ENCODE measurements at regions of chr17 and their contacts with region 1.

Region 1: GRCh38 chr17:17681187-17681848 is at the start of gene RAI1:
- DNase-seq: peak; percentile 77
- H3K4me3 Mint-ChIP-seq: peak within 1 kb of the TSS; percentile 87
- H3K27ac Mint-ChIP-seq: peak within 1 kb of the TSS; percentile 78
- H3K4me1 Mint-ChIP-seq: peaks cover 24% of the 10 kb centered on the region
- H3K27me3 Mint-ChIP-seq: no peaks in the 10 kb centered on the region
- total RNA-seq, gene RAI1: 10.5 to 11.0 TPM

Region 2: GRCh38 chr17:17613708-17614114 is 67.6 kb before region 1 on chr17:
- CTCF ChIA-PET with region 1: no interaction called
- POLR2A ChIA-PET with region 1: no interaction called
- intact Hi-C with region 1: no loop called
- DNase-seq: peak; percentile 60
- H3K4me3 Mint-ChIP-seq: no peak overlapping the region
- H3K27ac Mint-ChIP-seq: no peak overlapping the region
- H3K4me1 Mint-ChIP-seq: no peaks in the 10 kb centered on the region
- H3K27me3 Mint-ChIP-seq: no peaks in the 10 kb centered on the region

Region 3: DNA sequence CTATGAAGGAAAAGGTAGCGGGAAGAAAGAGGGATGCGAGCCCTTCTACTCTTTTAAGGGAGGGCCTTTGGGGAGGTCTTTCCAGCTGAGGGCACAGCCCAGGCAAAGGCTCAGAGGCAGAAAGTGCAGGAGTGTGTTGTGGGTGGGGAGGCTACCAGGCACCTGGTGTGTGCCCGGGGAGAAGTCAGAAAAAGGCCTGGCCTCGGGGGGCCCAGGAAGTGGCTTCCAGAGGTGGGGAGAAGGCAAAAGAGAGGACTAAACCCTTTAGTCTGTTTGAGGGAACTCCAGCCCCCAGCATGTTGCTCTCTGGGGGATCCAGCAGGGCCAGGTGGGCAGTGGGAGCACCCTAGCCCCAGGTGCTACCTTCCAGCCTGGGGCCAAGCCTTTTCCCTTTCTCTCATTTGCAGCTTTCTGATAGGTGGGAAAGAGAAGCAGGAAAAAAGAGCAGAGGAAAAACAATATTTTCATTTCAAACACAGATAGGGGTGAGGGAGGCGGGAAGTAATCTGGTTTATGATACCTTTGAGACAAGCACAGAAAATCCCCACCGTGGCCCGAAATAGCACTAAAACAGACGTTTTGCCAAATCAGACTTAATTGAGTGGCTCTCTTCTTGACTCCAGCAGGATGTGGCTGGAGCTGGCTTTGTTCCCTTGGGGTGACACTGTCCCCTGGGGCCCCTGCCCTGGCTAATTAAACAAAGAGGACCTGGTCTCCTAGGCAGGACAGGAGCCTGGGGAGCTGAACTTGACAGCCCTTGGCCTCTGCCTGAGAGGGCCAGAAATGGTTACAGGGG is 10.3 kb after region 1 on chr17:
- CTCF ChIA-PET with region 1: interaction called, 19 read pairs
- POLR2A ChIA-PET with region 1: interaction called, 6 read pairs
- intact Hi-C with region 1: no loop called
- DNase-seq: peak; percentile 22
- H3K4me3 Mint-ChIP-seq: no peak overlapping the region
- H3K27ac Mint-ChIP-seq: peak overlapping the region; percentile 49
- H3K4me1 Mint-ChIP-seq: peaks cover 50% of the 10 kb centered on the region
- H3K27me3 Mint-ChIP-seq: no peaks in the 10 kb centered on the region

Region 4: GRCh38 chr17:17752089-17752820 is 70.9 kb after region 1 on chr17:
- CTCF ChIA-PET with region 1: interaction called, 3 read pairs
- POLR2A ChIA-PET with region 1: no interaction called
- intact Hi-C with region 1: loop called (anchors 1 kb)
- DNase-seq: peak; percentile 99
- H3K4me3 Mint-ChIP-seq: peak overlapping the region; percentile 96
- H3K27ac Mint-ChIP-seq: peak overlapping the region; percentile 93
- H3K4me1 Mint-ChIP-seq: peaks cover 39% of the 10 kb centered on the region
- H3K27me3 Mint-ChIP-seq: no peaks in the 10 kb centered on the region

Region 5: DNA sequence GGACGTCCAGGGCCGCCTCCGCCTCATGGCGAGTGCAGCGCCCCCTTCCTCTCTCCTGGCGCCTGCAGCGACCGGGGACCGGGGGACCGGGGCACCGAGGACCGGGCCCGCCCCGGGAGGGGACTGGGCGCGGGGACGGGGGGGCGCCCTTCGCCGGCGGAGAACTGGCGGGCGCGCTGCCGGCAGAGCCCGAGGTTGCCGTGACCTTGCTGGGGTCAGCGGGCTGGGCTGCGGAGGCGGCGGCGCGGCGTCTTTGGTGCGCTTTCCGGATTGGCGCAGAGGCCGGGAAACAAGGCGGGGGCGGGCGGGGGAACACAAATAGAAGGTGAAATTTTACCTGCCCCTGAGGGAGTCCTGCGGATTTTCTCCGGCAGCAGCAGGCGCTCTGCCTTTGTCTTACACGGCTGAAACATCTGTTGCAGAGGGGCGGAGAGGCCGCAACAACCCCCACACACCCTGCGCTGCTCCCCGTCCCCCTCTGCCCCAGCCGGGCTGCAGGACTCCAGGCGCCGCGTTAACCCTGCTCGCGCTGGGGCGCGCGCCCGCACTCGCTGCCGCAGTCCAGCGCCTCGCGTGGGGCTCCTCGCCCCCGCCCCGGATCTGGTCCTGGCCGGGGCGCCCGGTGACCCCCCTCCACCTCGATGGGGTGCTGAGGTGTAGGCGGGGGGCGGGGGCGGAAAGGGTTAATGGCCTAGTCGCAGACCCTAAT is 102.0 kb after region 1 on chr17:
- CTCF ChIA-PET with region 1: interaction called, 3 read pairs
- POLR2A ChIA-PET with region 1: no interaction called
- intact Hi-C with region 1: loop called (anchors 5 kb)
- DNase-seq: peak; percentile 75
- H3K4me3 Mint-ChIP-seq: peak overlapping the region; percentile 67
- H3K27ac Mint-ChIP-seq: no peak overlapping the region
- H3K4me1 Mint-ChIP-seq: peaks cover 7% of the 10 kb centered on the region
- H3K27me3 Mint-ChIP-seq: no peaks in the 10 kb centered on the region

Region 6: GRCh38 chr17:17836250-17836817 is 155.0 kb after region 1 on chr17:
- CTCF ChIA-PET with region 1: interaction called, 5 read pairs
- POLR2A ChIA-PET with region 1: no interaction called
- intact Hi-C with region 1: loop called (anchors 5 kb)
- DNase-seq: peak; percentile 99
- H3K4me3 Mint-ChIP-seq: peak overlapping the region; percentile 89
- H3K27ac Mint-ChIP-seq: peak overlapping the region; percentile 96
- H3K4me1 Mint-ChIP-seq: peaks cover 68% of the 10 kb centered on the region
- H3K27me3 Mint-ChIP-seq: no peaks in the 10 kb centered on the region

Region 7: DNA sequence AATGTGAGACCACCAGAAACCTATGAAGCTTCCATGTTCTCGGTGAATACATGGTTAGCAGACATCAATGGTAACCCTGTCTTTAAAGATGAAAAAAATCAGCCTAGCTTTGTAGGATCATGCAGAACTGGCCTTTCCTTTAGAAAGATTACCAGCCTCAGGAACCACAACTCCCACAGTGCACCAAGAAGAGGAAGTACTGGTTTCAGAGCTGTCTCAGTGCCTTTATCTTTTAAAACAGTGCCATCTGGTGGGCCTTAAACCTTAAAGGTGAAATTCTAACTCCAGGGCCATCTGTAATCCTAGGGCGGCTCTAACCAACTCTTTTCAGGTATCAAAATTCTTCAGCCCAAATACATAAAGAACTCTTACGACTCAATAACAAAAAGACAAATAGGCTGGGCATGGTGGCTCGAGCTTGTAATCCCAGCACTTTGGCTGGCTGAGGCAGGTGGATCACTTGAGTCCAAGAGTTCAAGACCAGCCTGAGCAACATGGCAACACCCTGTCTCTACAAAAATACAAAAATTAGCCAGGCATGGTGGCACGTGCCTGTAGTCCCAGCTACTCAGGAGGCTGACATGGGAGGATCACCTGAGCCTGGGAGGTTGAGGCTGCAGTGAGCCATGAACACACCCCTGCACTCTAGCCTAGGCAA is 352.3 kb after region 1 on chr17:
- CTCF ChIA-PET with region 1: interaction called, 13 read pairs
- POLR2A ChIA-PET with region 1: no interaction called
- intact Hi-C with region 1: loop called (anchors 1 kb)
- DNase-seq: peak; percentile 62
- H3K4me3 Mint-ChIP-seq: no peak overlapping the region
- H3K27ac Mint-ChIP-seq: no peak overlapping the region
- H3K4me1 Mint-ChIP-seq: peaks cover 28% of the 10 kb centered on the region
- H3K27me3 Mint-ChIP-seq: no peaks in the 10 kb centered on the region